Activated naive CD8-positive, alpha-beta T cell treated with anti-CD3 and anti-CD28 coated beads, Interleukin-2, amount 10 ng/mL, durations not matched to agents 7 days and 5 days (primary cell): ENCODE measurements at regions of chr5 and their contacts with region 1.

Region 1: DNA sequence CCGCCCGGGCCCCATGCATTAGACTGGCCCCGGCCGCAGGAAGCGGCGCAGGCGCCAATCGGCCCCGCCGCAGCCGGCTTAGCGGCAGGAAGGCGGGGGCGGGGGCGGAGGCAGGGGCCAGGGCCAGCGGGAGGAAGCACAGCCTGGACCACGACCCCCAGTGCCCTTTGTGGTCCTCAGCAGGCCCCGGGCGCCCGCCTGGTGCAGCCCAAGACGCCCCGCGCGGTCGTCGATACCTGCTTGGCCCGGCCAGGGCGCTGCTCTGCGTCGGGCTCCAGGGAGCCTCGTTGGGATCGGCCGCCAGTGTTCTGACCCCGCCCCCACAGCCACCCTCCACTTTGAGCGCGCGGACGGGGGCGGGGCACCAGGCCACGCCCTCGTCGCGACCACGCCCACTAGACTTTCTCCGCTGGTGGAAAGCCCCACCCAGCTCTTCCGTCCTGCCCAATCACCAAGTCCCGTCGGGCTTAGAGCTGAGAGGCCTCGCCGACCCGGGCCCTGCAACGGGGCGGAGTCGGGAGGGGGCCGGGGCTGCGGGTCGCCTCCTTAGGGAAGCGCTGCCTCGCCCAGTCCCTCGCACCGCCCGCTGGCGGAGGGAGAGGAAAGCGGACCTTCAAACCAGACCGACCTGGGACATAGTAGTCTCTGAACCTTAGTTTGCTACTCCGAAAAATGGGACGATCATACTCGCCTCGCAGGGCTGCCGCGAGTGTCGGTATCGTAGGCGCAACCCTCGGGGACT is at the start of gene PDLIM7:
- DNase-seq: peak; percentile 98
- ATAC-seq: peak; percentile 83
- H3K4me3 Mint-ChIP-seq: peak within 1 kb of the TSS; percentile 87
- H3K27ac Mint-ChIP-seq: peak within 1 kb of the TSS; percentile 77
- H3K4me1 Mint-ChIP-seq: peaks cover 38% of the 10 kb centered on the region
- H3K27me3 Mint-ChIP-seq: peaks cover 17% of the 10 kb centered on the region
- total RNA-seq, gene PDLIM7: 51.6 to 60.6 TPM

Region 2: DNA sequence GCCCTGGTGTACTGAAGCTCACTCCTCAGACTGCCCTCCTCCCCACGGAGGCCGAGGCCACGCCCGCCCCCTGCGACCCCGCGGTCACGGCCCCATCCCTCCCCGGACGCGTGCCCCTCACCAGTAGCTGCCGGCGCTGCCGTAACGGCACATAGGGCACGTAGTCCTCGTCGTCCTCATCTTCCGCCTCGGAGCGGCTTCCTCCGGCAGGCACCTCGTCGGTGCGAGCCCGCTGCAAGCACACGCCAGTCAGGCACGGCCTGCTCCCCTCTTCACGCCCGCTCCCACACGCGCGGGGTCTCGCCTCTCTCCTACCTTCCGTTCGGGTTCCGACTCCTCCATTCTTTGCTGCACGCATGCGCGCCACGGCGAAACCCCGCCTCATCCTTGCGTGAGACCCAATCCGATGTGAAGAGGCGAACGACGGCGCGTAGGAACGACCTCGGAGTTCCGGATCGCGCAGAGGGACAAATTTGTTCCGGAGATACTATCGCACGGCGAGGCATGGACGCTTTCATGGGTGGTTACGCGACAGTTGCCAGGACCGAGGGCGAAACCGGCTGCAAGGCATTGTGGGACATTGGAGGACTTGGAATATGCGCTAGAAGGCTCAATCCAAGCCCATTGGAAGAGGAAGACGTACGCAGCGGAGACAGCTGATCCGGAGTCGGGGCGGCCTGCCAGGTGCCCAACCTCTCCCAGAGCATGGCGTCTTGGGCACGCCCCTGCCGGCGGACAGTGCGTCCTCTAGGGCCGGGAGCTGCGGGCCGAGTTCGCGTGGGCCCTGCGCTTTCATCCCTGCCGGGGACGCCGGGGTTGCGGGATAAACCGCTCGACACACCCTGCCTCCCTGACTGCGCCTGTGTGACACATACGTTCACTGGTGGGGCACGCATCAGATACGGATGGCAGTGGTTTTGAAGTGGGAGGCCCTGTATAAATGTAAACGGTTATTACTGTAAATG is 19.4 kb after region 1 on chr5 and contains the start of gene DDX41:
- POLR2A ChIA-PET with region 1: interaction called, 13 read pairs
- DNase-seq: peak; percentile 97
- ATAC-seq: peak; percentile 91
- H3K4me3 Mint-ChIP-seq: peak within 1 kb of the TSS; percentile 99
- H3K27ac Mint-ChIP-seq: peak within 1 kb of the TSS; percentile 90
- H3K4me1 Mint-ChIP-seq: peaks cover 41% of the 10 kb centered on the region
- H3K27me3 Mint-ChIP-seq: no peaks in the 10 kb centered on the region
- total RNA-seq, gene DDX41: 132 to 135 TPM